Activated CD8-positive, alpha-beta T cell treated with anti-CD3 and anti-CD28 coated beads, Interleukin-2, amount 10 ng/mL, durations not matched to agents 7 days and 5 days (primary cell): ENCODE measurements at regions of chr4 and their contacts with region 1.

Region 1: DNA sequence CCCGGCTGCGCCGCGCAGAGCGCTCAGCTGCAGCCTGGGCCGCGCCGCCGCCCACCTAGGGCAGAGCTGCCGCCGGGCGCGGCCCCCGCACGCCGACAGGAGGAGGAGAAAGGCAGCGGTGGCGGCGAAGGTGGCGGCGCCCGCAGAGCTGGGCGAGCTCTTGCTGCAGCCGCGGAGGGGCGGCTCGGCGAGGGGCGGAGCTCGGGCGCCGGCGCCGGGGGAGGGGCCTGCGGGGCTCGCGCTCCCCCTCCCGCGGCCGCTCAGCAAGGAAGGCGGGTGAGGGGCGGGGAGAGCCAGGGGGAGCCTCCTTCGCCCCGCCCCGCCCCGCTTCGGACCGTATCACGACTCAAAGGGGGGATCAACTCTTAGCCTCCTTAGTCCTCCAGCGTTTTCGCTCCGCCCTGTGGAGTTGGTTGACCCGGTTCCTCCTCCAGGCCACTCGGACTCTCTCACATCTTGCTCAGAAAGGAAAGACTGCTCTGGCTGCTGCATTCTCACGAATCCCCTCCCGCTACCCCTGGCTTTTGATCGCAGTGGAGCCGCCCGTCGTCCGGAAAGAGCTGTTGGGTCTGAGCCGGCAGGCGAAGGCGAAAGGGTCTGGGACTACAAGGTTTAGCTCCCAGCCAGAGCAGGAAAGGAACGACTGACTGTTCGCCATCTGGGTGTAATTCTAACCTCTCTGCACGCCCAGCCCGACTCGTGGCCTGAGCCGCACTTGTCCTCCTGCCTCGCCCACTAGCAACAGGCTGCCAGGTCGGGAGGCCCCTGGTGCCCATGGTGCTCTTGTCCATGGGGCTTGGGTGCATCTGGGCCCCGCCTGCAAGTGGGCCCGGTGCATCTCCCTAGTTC is at the start of gene ATP8A1:
- DNase-seq: peak; percentile 94
- ATAC-seq: peak; percentile 89
- H3K4me3 Mint-ChIP-seq: peak within 1 kb of the TSS; percentile 95
- H3K27ac Mint-ChIP-seq: peak within 1 kb of the TSS; percentile 100
- H3K4me1 Mint-ChIP-seq: peaks cover 36% of the 10 kb centered on the region
- H3K27me3 Mint-ChIP-seq: peaks cover 2% of the 10 kb centered on the region
- total RNA-seq, gene ATP8A1: 37.2 to 38.5 TPM

Region 2: GRCh38 chr4:42501624-42502401 is 155.4 kb before region 1 on chr4:
- CTCF ChIA-PET with region 1: no interaction called
- POLR2A ChIA-PET with region 1: no interaction called
- DNase-seq: no peak
- ATAC-seq: no peak
- H3K4me3 Mint-ChIP-seq: no peak overlapping the region
- H3K27ac Mint-ChIP-seq: no peak overlapping the region
- H3K4me1 Mint-ChIP-seq: no peaks in the 10 kb centered on the region
- H3K27me3 Mint-ChIP-seq: no peaks in the 10 kb centered on the region

Region 3: GRCh38 chr4:42568610-42569207 is 88.5 kb before region 1 on chr4:
- CTCF ChIA-PET with region 1: interaction called, 5 read pairs
- POLR2A ChIA-PET with region 1: interaction called, 12 read pairs
- DNase-seq: peak; percentile 80
- ATAC-seq: peak; percentile 85
- H3K4me3 Mint-ChIP-seq: no peak overlapping the region
- H3K27ac Mint-ChIP-seq: no peak overlapping the region
- H3K4me1 Mint-ChIP-seq: no peaks in the 10 kb centered on the region
- H3K27me3 Mint-ChIP-seq: no peaks in the 10 kb centered on the region

Region 4: DNA sequence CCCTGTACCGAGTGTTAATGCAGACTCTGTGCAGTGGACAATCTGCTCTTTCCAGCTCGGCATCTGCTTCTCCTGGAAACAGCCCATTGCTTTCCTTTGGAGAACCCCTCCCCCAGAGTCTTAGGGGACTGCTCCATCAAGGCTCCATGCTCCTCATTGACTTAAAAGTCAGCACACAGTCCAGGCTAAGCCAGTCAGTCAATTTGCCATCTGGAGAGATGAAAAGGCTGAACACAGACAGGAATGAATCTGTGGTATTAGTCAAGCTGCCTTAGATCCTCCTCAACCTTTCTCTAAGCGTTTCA is 20.6 kb before region 1 on chr4:
- CTCF ChIA-PET with region 1: interaction called, 3 read pairs
- POLR2A ChIA-PET with region 1: interaction called, 15 read pairs
- DNase-seq: no peak
- ATAC-seq: no peak
- H3K4me3 Mint-ChIP-seq: no peak overlapping the region
- H3K27ac Mint-ChIP-seq: no peak overlapping the region
- H3K4me1 Mint-ChIP-seq: peaks cover 53% of the 10 kb centered on the region
- H3K27me3 Mint-ChIP-seq: no peaks in the 10 kb centered on the region

Region 5: GRCh38 chr4:42646013-42646784 is 11.0 kb before region 1 on chr4:
- CTCF ChIA-PET with region 1: interaction called, 12 read pairs
- POLR2A ChIA-PET with region 1: interaction called, 11 read pairs
- DNase-seq: no peak
- ATAC-seq: no peak
- H3K4me3 Mint-ChIP-seq: no peak overlapping the region
- H3K27ac Mint-ChIP-seq: no peak overlapping the region
- H3K4me1 Mint-ChIP-seq: peaks cover 50% of the 10 kb centered on the region
- H3K27me3 Mint-ChIP-seq: no peaks in the 10 kb centered on the region

Region 6: GRCh38 chr4:42673082-42673425 is 15.9 kb after region 1 on chr4:
- CTCF ChIA-PET with region 1: interaction called, 26 read pairs
- POLR2A ChIA-PET with region 1: interaction called, 62 read pairs
- DNase-seq: peak; percentile 51
- ATAC-seq: peak; percentile 47
- H3K4me3 Mint-ChIP-seq: peak overlapping the region; percentile 72
- H3K27ac Mint-ChIP-seq: peak overlapping the region; percentile 97
- H3K4me1 Mint-ChIP-seq: peaks cover 61% of the 10 kb centered on the region
- H3K27me3 Mint-ChIP-seq: no peaks in the 10 kb centered on the region

Region 7: GRCh38 chr4:42678512-42678911 is 21.3 kb after region 1 on chr4:
- CTCF ChIA-PET with region 1: interaction called, 21 read pairs
- POLR2A ChIA-PET with region 1: interaction called, 58 read pairs
- DNase-seq: no peak
- ATAC-seq: no peak
- H3K4me3 Mint-ChIP-seq: no peak overlapping the region
- H3K27ac Mint-ChIP-seq: no peak overlapping the region
- H3K4me1 Mint-ChIP-seq: peaks cover 39% of the 10 kb centered on the region
- H3K27me3 Mint-ChIP-seq: no peaks in the 10 kb centered on the region